ENCODE measurements at regions of chr1 and their contacts with region 1.

Region 1: DNA sequence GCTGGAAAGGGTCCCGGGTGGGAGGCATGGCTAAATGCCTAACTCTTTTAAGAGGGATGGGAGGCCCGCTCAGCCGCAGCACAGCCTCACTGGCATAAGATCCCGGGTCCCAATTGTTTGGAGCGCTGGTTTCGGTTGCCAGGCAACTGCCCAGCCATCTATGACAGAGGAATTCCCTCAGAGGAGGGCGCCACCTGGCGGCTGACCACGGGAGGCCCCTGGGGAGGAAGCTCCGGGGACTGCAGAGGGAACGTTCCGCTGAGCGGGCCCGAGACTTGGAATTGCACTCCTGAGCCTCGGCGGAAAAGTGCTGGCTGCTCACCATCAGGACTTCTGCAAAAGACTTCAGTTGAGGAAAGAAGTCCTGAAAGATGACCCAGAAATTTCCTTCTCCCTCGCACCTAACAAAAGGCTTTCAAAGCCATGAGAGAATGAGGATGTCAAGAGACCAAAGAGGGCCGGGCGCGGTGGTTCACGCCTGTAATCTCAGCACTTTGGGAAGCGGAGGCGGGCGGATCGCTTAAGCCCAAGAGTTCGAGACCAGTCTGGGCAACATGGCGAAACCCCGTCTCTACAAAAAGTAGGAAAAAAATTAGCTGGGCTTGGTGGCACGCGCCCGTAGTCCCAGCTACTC is 1.1 kb upstream of the ELAPOR1 start:
- DNase-seq: peak; percentile 90 to 94
- ATAC-seq: peak; percentile 73 to 86 (median 76)
- H3K4me3 ChIP-seq: peak overlapping the region; percentile 19
- H3K4me3 Mint-ChIP-seq: peak overlapping the region; percentile 96
- H3K27ac ChIP-seq: peak overlapping the region; percentile 22
- H3K27ac Mint-ChIP-seq: peak overlapping the region; percentile 95 to 97
- H3K4me1 ChIP-seq: peaks cover 21% of the 10 kb centered on the region
- H3K4me1 Mint-ChIP-seq: peaks cover 21 to 29% of the 10 kb centered on the region in 2 donors
- H3K27me3 ChIP-seq: no peaks in the 10 kb centered on the region
- H3K27me3 Mint-ChIP-seq: peaks cover 15 to 22% of the 10 kb centered on the region in 2 donors
- CTCF ChIP-seq: peak; percentile 99

Region 2: DNA sequence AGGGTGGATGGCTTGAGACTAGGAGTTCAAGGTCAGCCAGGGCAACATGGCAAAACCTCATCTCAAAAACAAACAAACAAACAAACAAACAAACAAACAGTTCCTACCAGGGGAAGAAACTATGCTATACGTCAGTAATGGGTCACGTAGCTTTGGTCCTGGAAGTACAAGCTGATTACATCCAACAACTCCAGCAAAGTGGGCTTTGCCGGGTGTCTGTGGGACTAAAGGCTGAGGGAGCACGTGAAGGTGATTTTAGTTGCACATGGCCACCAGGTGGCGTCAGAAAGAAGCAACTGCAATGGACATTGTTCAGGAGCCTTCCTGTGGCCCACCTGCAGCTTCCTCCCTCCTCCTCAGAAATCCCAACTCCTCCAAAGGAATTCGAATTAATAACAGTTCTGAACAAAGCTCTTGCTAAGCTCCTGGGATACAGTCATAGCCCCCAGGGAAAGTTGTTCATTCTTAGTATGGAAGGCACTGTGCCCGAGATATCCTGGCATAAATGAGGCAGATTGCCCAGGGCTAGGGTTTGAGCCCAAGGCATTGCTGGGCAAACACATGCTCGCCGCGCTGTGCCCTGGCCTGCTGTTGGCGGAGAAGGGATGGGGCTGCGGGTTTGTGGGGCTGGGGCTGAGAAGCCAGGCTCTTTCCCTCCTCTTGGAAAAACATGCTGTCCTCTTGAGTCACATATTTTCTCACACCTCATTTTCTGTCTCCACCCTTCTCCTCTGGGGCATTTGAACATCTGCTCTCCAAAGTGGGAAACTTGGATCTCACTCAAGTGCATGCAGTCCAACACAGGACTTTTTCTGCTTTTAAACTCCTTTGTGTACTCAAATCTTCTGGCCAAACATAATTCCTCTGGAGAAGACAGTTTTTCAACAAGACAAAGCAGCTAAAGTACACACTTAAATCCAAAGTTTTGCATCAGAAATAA is 284.5 kb before region 1 on chr1:
- intact Hi-C with region 1: loop called (anchors 1 kb)
- DNase-seq: peak; percentile 59 to 79
- ATAC-seq: peak in 2 of 3 donors; percentile 70 to 80
- H3K4me3 ChIP-seq: no peak overlapping the region
- H3K4me3 Mint-ChIP-seq: no peak overlapping the region
- H3K27ac ChIP-seq: no peak overlapping the region
- H3K27ac Mint-ChIP-seq: no peak overlapping the region
- H3K4me1 ChIP-seq: peaks cover 9% of the 10 kb centered on the region
- H3K4me1 Mint-ChIP-seq: peaks cover 14 to 16% of the 10 kb centered on the region in 2 donors
- H3K27me3 ChIP-seq: no peaks in the 10 kb centered on the region
- H3K27me3 Mint-ChIP-seq: no peaks in the 10 kb centered on the region
- CTCF ChIP-seq: peak; percentile 76

Region 3: DNA sequence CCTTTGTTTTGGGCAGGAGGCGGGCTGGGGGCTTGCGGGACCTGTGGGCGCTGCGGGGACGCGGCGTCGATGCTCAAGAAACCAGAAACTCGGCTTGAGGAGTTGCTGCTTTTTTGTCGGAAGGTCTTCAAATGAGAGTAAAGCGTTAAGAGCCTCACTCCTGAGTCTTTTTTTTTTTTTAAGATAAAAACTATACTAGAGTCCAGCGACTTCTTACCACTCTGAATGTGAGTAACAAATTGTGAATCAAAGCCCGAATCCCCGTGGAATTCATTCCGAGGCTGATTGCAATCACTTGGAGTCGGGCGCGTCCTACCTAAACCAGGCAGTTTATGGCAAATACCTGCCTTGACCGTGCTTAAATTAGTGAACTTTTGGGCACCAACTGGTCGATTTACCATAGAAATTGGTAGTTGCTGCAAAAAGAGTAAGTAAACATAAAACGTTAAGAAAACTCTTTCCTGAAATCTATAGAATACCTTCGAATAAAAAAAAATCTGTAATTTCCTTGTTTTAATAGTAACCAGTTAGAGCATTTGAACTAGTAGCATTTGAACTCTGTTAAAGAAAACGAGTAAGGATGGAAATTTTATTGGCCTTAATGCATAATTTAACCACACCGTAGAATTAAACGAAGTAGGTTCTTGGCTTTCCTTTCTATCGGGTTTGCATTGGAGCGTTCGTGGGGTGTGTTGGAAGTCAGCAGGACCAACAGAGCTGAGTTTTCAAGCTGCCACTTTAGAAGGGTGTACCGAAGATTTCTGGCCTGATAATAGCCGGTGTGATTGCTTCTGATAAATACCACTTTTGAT is 235.2 kb before region 1 on chr1:
- intact Hi-C with region 1: loop called (anchors 5 kb)
- DNase-seq: peak in 1 of 2 donors; percentile 13
- ATAC-seq: no peak
- H3K4me3 ChIP-seq: peak overlapping the region; percentile 54
- H3K4me3 Mint-ChIP-seq: peak overlapping the region; percentile 94
- H3K27ac ChIP-seq: peak overlapping the region; percentile 0
- H3K27ac Mint-ChIP-seq: peak overlapping the region; percentile 77 to 86
- H3K4me1 ChIP-seq: peaks cover 17% of the 10 kb centered on the region
- H3K4me1 Mint-ChIP-seq: peaks cover 12 to 13% of the 10 kb centered on the region in 2 donors
- H3K27me3 ChIP-seq: no peaks in the 10 kb centered on the region
- H3K27me3 Mint-ChIP-seq: peaks cover 8 to 12% of the 10 kb centered on the region in 2 donors
- CTCF ChIP-seq: no peak

Region 4: GRCh38 chr1:108925920-108926319 is 186.8 kb before region 1 on chr1:
- intact Hi-C with region 1: no loop called
- DNase-seq: no peak
- ATAC-seq: no peak
- H3K4me3 ChIP-seq: no peak overlapping the region
- H3K4me3 Mint-ChIP-seq: no peak overlapping the region
- H3K27ac ChIP-seq: no peak overlapping the region
- H3K27ac Mint-ChIP-seq: no peak overlapping the region
- H3K4me1 ChIP-seq: no peaks in the 10 kb centered on the region
- H3K4me1 Mint-ChIP-seq: no peaks in the 10 kb centered on the region
- H3K27me3 ChIP-seq: no peaks in the 10 kb centered on the region
- H3K27me3 Mint-ChIP-seq: no peaks in the 10 kb centered on the region
- CTCF ChIP-seq: no peak

Region 5: GRCh38 chr1:108963052-108963686 is 149.6 kb before region 1 on chr1 and contains the start of gene CLCC1:
- intact Hi-C with region 1: loop called (anchors 2 kb)
- DNase-seq: peak; percentile 88 to 95
- ATAC-seq: peak; percentile 88 to 95 (median 94)
- H3K4me3 ChIP-seq: peak within 1 kb of the TSS; percentile 52
- H3K4me3 Mint-ChIP-seq: peak within 1 kb of the TSS; percentile 93
- H3K27ac ChIP-seq: peak within 1 kb of the TSS; percentile 82
- H3K27ac Mint-ChIP-seq: peak within 1 kb of the TSS; percentile 89 to 90
- H3K4me1 ChIP-seq: peaks cover 18% of the 10 kb centered on the region
- H3K4me1 Mint-ChIP-seq: peaks cover 20 to 24% of the 10 kb centered on the region in 2 donors
- H3K27me3 ChIP-seq: peaks cover 3% of the 10 kb centered on the region
- H3K27me3 Mint-ChIP-seq: peaks cover 0 to 10% of the 10 kb centered on the region in 2 donors
- CTCF ChIP-seq: no peak
- total RNA-seq, gene CLCC1: 12.8 to 25.8 (median 17.1) TPM

Region 6: DNA sequence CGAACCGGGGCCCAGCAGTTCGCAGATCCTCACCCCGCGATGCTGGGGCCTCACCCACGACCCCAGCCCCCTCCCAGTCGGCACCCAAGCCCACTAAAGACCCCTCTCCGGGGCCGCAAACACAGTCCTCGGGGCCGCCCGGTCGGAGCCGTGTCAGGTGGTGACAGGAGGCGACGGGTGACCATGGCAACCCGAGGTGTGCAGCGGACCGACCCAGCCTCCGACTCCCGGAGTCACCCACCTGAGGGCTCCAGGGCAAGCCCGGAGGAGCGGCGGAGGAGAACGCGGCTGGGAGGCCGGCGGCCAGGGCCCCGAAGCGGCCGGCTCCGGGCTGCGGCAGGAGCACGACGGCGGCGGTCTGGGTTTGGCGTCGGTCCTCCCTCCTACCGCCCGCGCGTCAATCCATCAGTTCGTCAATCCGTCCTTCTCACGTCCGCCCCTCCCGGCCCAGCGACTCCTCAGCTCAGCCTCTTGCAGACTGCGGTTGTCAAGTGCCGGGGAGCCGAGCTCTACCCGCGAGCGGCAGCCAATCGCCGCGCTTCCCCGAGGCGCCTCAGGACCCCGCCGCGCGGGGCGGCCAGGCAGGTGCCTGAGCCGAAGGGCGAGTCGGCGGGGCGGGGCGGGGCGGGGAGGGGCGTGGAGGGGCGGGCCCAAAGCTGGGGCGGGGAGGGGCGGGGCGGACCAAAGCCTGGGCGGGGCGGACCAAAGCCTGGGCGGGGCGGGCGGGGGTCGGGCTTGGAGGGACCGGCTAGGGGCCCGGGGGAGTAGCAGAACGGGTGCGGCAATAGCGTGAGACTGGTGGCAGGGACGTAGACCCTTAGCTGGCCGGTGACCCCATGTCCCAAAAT is 70.9 kb before region 1 on chr1 and contains the start of gene WDR47:
- intact Hi-C with region 1: loop called (anchors 5 kb)
- DNase-seq: peak; percentile 95 to 98
- ATAC-seq: peak; percentile 96 to 99 (median 97)
- H3K4me3 ChIP-seq: peak within 1 kb of the TSS; percentile 90
- H3K4me3 Mint-ChIP-seq: peak within 1 kb of the TSS; percentile 91
- H3K27ac ChIP-seq: peak within 1 kb of the TSS; percentile 82
- H3K27ac Mint-ChIP-seq: peak within 1 kb of the TSS; percentile 79 to 90
- H3K4me1 ChIP-seq: peaks cover 13% of the 10 kb centered on the region
- H3K4me1 Mint-ChIP-seq: peaks cover 14% of the 10 kb centered on the region in 2 donors
- H3K27me3 ChIP-seq: no peaks in the 10 kb centered on the region
- H3K27me3 Mint-ChIP-seq: no peaks in the 10 kb centered on the region
- CTCF ChIP-seq: no peak
- total RNA-seq, gene WDR47: 15.7 to 21.3 (median 17.2) TPM

Region 7: GRCh38 chr1:109075531-109076490 is 37.0 kb before region 1 on chr1 and contains the start of gene TAF13:
- intact Hi-C with region 1: loop called (anchors 1 kb)
- DNase-seq: peak; percentile 87 to 93
- ATAC-seq: peak; percentile 98 to 99 (median 99)
- H3K4me3 ChIP-seq: peak within 1 kb of the TSS; percentile 88
- H3K4me3 Mint-ChIP-seq: peak within 1 kb of the TSS; percentile 98
- H3K27ac ChIP-seq: peak within 1 kb of the TSS; percentile 90
- H3K27ac Mint-ChIP-seq: peak within 1 kb of the TSS; percentile 99
- H3K4me1 ChIP-seq: peaks cover 8% of the 10 kb centered on the region
- H3K4me1 Mint-ChIP-seq: peaks cover 21% of the 10 kb centered on the region in 2 donors
- H3K27me3 ChIP-seq: no peaks in the 10 kb centered on the region
- H3K27me3 Mint-ChIP-seq: peaks cover 3 to 6% of the 10 kb centered on the region in 2 donors
- CTCF ChIP-seq: no peak
- total RNA-seq, gene TAF13: 44.4 to 54.5 (median 47.2) TPM

Region 8: DNA sequence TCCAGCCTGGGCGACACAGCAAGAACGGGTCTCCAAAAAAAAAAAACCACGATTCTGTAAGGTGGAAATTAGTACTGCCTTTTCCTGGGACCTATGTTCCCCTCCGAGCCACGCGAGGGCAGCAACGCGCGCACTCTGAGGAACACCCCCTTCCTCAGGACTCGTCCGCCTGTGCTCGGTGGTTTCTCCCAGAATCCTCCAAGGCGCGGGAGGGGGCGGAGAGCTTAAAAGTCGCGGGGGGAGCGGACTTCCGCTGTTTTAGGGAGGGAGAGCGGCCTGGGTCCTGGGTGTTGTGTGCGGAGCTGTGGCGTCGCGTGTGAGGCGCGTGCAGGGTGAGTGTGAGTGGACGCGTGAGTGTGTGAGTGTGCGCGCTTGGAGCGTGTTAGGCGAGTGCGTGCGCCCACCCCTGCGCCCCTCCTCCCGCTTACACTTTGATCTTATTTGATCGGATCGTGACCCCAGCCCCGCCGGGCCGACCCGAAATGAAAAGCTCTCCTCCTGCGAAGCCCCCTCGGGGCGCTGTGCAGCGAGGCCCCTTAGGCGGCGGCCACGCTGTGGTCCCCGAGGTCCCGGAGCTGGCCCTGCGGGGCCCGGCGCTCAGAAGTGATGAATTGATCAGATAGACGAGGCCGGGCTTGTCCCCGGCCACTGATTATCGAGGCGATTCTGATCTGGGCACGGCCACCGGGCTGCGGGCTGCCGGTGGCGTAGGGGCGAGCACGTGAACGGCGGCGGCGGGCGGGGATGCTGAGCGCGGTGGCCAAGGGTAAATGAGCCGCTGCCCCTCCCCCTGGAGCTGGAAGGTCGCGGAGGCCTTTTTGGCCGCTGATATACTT is 12.6 kb before region 1 on chr1:
- intact Hi-C with region 1: loop called (anchors 1 kb)
- DNase-seq: peak; percentile 91 to 98
- ATAC-seq: peak; percentile 93 to 98 (median 94)
- H3K4me3 ChIP-seq: peak overlapping the region; percentile 95
- H3K4me3 Mint-ChIP-seq: peak overlapping the region; percentile 98
- H3K27ac ChIP-seq: peak overlapping the region; percentile 94
- H3K27ac Mint-ChIP-seq: peak overlapping the region; percentile 93 to 97
- H3K4me1 ChIP-seq: peaks cover 19% of the 10 kb centered on the region
- H3K4me1 Mint-ChIP-seq: peaks cover 13 to 20% of the 10 kb centered on the region in 2 donors
- H3K27me3 ChIP-seq: no peaks in the 10 kb centered on the region
- H3K27me3 Mint-ChIP-seq: no peaks in the 10 kb centered on the region
- CTCF ChIP-seq: peak; percentile 72